ENCODE measurements at regions of chr3 and their contacts with region 1.

Region 1: DNA sequence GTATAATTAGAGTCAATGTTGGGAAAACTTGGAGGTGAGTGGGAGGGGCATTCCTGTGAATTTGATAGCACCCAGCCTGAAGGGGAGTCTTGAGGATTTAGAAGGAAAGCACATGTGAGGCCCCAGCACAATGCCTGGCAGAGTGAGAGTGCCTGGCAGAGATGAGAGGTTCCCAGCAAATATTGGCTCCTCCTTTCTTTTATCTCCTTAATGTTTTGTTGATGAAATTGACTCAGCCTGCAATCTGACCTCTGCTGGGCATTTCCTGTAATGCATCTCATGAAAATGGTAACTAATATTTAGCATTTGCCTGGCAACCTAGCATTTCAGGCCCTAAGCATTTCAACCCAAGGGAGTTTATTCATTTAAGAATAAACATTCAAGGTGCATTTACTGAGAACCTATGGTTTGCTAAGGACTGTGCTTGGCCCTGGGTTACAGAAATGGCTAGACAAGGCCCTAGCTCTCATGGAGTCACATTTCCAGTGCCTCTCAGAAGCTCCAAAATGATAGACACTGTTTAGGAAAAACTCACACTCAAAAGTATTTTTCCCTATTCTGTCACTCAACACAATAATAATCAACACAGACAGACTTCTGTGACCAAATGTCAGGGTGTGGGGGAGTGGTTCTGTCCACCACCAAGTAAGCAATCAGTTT is 19.0 kb downstream of the PDHB start:
- DNase-seq: no peak
- H3K4me3 ChIP-seq: no peak overlapping the region
- H3K27ac ChIP-seq: no peak overlapping the region
- H3K4me1 ChIP-seq: no peaks in the 10 kb centered on the region
- H3K27me3 ChIP-seq: no peaks in the 10 kb centered on the region
- CTCF ChIP-seq: peak; percentile 83 to 86 (median 84)
- POLR2A ChIP-seq: no peak

Region 2: GRCh38 chr3:58332575-58333188 is 82.0 kb before region 1 on chr3 and contains the start of gene PXK:
- intact Hi-C with region 1: loop called (anchors 5 kb)
- DNase-seq: peak; percentile 45 to 70
- H3K4me3 ChIP-seq: peak within 1 kb of the TSS; percentile 85 to 91 (median 86)
- H3K27ac ChIP-seq: peak within 1 kb of the TSS; percentile 44 to 74
- H3K4me1 ChIP-seq: peaks cover 0 to 7% of the 10 kb centered on the region in 2 donors
- H3K27me3 ChIP-seq: no peaks in the 10 kb centered on the region
- CTCF ChIP-seq: peak in 1 of 3 donors; percentile 14
- POLR2A ChIP-seq: no peak
- total RNA-seq, gene PXK: 30.3 to 36.1 (median 34.6) TPM

Region 3: GRCh38 chr3:59084583-59084982 is 669.9 kb after region 1 on chr3:
- intact Hi-C with region 1: no loop called
- DNase-seq: no peak
- H3K4me3 ChIP-seq: no peak overlapping the region
- H3K27ac ChIP-seq: no peak overlapping the region
- H3K4me1 ChIP-seq: no peaks in the 10 kb centered on the region
- H3K27me3 ChIP-seq: no peaks in the 10 kb centered on the region
- CTCF ChIP-seq: no peak
- POLR2A ChIP-seq: no peak

Region 4: DNA sequence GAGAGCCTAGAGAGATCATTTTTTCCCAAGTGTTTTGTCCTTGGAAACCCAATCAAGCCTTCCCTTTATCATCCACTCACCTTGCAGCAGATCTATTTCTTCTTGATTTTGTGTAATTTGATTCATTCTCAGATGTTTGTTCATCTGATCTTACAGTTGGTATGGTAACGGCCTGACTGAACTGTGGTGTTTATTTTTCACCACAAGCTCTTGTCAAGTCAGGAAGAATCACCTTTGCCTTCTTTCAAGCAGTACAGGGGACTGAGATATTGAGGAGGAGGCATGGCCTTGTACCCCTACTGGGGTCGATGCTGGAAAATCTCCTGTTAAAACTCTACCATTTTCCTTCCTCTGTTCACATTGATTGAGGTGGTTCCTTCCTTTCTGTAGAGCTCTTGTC is 996.5 kb after region 1 on chr3:
- intact Hi-C with region 1: loop called (anchors 5 kb)
- DNase-seq: no peak
- H3K4me3 ChIP-seq: no peak overlapping the region
- H3K27ac ChIP-seq: no peak overlapping the region
- H3K4me1 ChIP-seq: no peaks in the 10 kb centered on the region
- H3K27me3 ChIP-seq: no peaks in the 10 kb centered on the region
- CTCF ChIP-seq: no peak
- POLR2A ChIP-seq: no peak

Region 5: DNA sequence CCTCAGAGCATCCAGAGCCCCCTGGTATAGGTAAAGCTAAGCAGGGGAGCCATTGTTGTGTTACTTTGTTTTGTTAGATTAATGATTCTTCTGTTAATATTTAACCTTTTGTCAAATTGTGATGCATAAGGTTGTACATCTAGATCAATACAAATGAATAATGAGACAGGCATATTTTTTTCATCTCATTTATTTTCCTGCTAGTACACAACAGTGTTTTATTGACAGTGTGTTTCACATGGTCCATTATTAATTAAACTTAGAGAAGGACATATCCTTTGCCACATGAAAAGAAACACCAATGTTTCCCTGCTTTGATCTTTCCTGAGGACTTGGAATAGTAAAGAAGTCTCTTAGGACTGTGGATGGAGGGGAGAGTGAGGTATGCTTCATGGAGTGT is 1178.7 kb after region 1 on chr3:
- intact Hi-C with region 1: no loop called
- DNase-seq: no peak
- H3K4me3 ChIP-seq: no peak overlapping the region
- H3K27ac ChIP-seq: no peak overlapping the region
- H3K4me1 ChIP-seq: no peaks in the 10 kb centered on the region
- H3K27me3 ChIP-seq: no peaks in the 10 kb centered on the region
- CTCF ChIP-seq: no peak
- POLR2A ChIP-seq: no peak